Left colon (tissue), 2 donors: ENCODE measurements at regions of chr3 and their contacts with region 1.

Region 1: GRCh38 chr3:108552267-108553159 is 36.7 kb downstream of the CIP2A start:
- DNase-seq: no peak
- ATAC-seq: peak; percentile 30

Region 2: GRCh38 chr3:108489771-108490170 is 62.7 kb before region 1 on chr3:
- intact Hi-C with region 1: loop called in 1 of 2 experiments (anchors 2 kb)
- DNase-seq: peak in 1 of 2 donors; percentile 5
- ATAC-seq: peak; percentile 68